ENCODE measurements at regions of chr1 and their contacts with region 1.

Region 1: DNA sequence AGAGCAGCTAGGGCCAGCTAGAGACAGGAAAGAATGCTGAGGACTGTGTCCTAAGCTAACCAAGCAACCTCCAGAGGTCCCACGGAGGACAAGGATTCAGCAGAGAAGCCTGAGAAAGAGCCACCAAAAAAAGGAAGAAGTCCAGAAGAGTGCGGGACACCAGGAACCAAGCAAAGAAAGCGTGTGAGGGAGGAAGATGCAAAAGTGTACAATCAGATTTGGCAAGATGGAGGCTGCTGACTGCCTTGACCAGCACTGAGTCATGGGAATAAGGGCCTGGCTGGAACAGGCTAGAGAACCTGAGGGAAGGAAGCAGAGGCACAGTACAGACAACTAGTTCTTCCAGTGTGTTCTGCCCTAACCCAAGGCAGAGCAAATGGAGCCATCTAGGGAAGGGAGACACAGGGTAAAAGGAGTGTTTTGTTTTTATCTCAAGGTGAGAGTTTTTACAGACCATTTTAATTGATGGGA is 18.5 kb downstream of the TP53BP2 start:
- DNase-seq: no peak
- H3K4me3 ChIP-seq: no peak overlapping the region
- H3K27ac ChIP-seq: no peak overlapping the region
- H3K4me1 ChIP-seq: peaks cover 0 to 7% (median 3%) of the 10 kb centered on the region in 4 experiments; a peak in 5 of 7 replicates
- H3K27me3 ChIP-seq: no peaks in the 10 kb centered on the region
- CTCF ChIP-seq: no peak
- EP300 ChIP-seq: no peak
- POLR2A ChIP-seq: no peak
- RAD21 ChIP-seq: no peak

Region 2: GRCh38 chr1:223811634-223812415 is 15.4 kb before region 1 on chr1:
- CTCF ChIA-PET with region 1: interaction called, 16 read pairs
- POLR2A ChIA-PET with region 1: no interaction called
- DNase-seq: no peak
- H3K4me3 ChIP-seq: no peak overlapping the region
- H3K27ac ChIP-seq: no peak overlapping the region
- H3K4me1 ChIP-seq: no peaks in the 10 kb centered on the region
- H3K27me3 ChIP-seq: peaks cover 0 to 1% (median 0%) of the 10 kb centered on the region in 4 experiments; a peak in 1 of 7 replicates
- CTCF ChIP-seq: peak in 2 of 3 experiments; percentile 26 to 39; a peak in 2 of 4 replicates
- EP300 ChIP-seq: no peak
- POLR2A ChIP-seq: no peak
- RAD21 ChIP-seq: peak; percentile 59 to 68

Measured in H1 (cell line).